B cell (primary cell): ENCODE measurements at regions of chr14 and their contacts with region 1.

Region 1: GRCh38 chr14:63641473-63642228 is at the start of gene WDR89:
- DNase-seq: peak; percentile 99
- ATAC-seq: peak; percentile 83
- H3K4me3 ChIP-seq: peak within 1 kb of the TSS; percentile 81 to 98 (median 86)
- H3K4me3 Mint-ChIP-seq: peak within 1 kb of the TSS; percentile 85
- H3K27ac ChIP-seq: peak within 1 kb of the TSS; percentile 97 to 99
- H3K27ac Mint-ChIP-seq: peak within 1 kb of the TSS; percentile 89
- H3K4me1 ChIP-seq: peaks cover 18% of the 10 kb centered on the region in 2 donors
- H3K4me1 Mint-ChIP-seq: peaks cover 34% of the 10 kb centered on the region
- H3K27me3 ChIP-seq: no peaks in the 10 kb centered on the region
- H3K27me3 Mint-ChIP-seq: no peaks in the 10 kb centered on the region
- CTCF ChIP-seq: peak; percentile 88
- total RNA-seq, gene WDR89: 19.0 and 21.8 TPM in 2 replicates

Region 2: GRCh38 chr14:63717702-63718101 is 76.1 kb after region 1 on chr14:
- CTCF ChIA-PET with region 1: no interaction called
- POLR2A ChIA-PET with region 1: no interaction called
- intact Hi-C with region 1: loop called (anchors 5 kb)
- DNase-seq: peak; percentile 37
- ATAC-seq: no peak
- H3K4me3 ChIP-seq: no peak overlapping the region
- H3K4me3 Mint-ChIP-seq: no peak overlapping the region
- H3K27ac ChIP-seq: no peak overlapping the region
- H3K27ac Mint-ChIP-seq: no peak overlapping the region
- H3K4me1 ChIP-seq: peaks cover 0 to 5% of the 10 kb centered on the region in 2 donors
- H3K4me1 Mint-ChIP-seq: peaks cover 25% of the 10 kb centered on the region
- H3K27me3 ChIP-seq: no peaks in the 10 kb centered on the region
- H3K27me3 Mint-ChIP-seq: no peaks in the 10 kb centered on the region
- CTCF ChIP-seq: no peak

Region 3: DNA sequence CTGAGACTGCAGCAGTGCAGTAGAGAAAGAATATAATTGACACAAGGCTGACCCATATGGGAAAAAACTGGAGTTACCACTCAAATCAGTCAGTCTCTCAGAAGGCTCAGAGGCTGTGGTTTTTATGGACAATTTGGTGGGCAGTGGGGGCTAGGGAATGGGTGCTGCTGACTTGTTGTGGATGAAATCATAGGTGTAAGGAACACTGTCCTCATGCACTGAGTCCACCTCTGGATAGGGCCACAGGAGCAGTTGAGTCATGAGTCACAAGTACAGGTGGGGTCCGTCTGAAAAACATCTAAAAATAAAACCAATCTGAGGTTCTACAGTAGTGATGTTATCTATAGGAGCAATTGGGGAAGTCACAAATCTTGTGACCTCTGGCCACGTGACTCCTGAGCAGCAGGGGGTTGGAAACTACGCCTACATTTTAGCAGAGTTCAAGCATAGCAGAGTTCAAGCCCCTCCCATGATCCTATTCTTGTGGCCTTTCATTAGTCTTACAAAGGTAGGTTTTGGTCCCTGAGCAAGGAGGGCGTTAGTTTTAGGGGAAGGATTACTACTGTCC is 104.3 kb after region 1 on chr14:
- CTCF ChIA-PET with region 1: no interaction called
- POLR2A ChIA-PET with region 1: interaction called, 7 read pairs
- intact Hi-C with region 1: loop called (anchors 1 kb)
- DNase-seq: peak; percentile 87
- ATAC-seq: peak; percentile 75
- H3K4me3 ChIP-seq: peak overlapping the region in 2 of 5 experiments; percentile 1 to 41
- H3K4me3 Mint-ChIP-seq: peak overlapping the region; percentile 76
- H3K27ac ChIP-seq: peak overlapping the region; percentile 94 to 97
- H3K27ac Mint-ChIP-seq: peak overlapping the region; percentile 99
- H3K4me1 ChIP-seq: peaks cover 39 to 54% of the 10 kb centered on the region in 2 donors
- H3K4me1 Mint-ChIP-seq: peaks cover 40% of the 10 kb centered on the region
- H3K27me3 ChIP-seq: no peaks in the 10 kb centered on the region
- H3K27me3 Mint-ChIP-seq: no peaks in the 10 kb centered on the region
- CTCF ChIP-seq: no peak

Region 4: DNA sequence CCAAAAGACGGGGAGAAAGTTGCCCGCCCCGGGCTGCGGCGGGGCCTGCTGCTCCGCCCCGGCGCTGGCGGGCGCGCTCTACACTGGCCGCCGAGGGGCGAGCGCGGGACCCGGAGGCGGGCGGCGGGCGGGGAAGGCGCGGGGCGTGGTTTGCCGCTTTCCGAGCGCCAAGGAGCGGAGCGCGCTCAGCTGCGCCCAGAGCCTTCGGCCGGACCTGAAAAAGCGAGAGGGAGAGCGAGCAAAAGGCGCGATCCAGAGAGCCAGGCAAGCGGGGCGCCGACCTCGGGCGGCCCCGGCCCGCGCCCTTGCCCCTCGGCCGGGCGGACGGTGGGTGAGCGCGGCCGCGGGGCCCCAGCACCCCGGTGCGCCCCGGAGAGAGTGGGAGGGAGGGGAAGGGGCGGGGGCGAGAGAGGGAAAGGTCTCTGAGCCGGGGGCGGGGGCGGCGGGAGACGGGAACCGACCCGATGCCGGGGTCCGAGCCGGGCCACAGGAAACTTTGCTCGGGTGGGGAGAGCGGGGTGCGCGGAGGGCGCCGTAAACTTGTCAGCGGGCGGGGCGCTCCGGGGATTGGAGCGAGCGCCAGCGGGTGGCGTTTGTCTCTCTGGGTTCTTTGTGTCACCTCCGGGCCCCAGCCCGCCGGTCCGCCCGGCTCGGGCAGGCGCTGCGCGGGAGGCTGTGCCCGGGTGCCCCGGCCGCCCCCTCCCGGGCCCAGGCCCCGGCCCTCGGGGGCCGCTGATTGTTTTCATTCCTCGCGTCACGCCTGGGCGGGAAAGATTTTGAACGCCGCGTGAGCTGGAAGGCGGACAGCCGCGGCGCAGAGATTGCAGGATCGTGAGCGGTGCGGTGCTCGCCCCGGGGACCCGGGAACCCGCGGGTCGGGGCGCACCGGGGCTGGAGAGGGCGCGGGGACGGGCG is 211.4 kb after region 1 on chr14 and contains the start of gene SYNE2:
- CTCF ChIA-PET with region 1: no interaction called
- POLR2A ChIA-PET with region 1: no interaction called
- intact Hi-C with region 1: loop called (anchors 2 kb)
- DNase-seq: peak; percentile 89
- ATAC-seq: peak; percentile 84
- H3K4me3 ChIP-seq: peak within 1 kb of the TSS; percentile 46 to 72 (median 64)
- H3K4me3 Mint-ChIP-seq: peak within 1 kb of the TSS; percentile 94
- H3K27ac ChIP-seq: peak within 1 kb of the TSS; percentile 30 to 43
- H3K27ac Mint-ChIP-seq: peak within 1 kb of the TSS; percentile 95
- H3K4me1 ChIP-seq: peaks cover 13 to 14% of the 10 kb centered on the region in 2 donors
- H3K4me1 Mint-ChIP-seq: peaks cover 27% of the 10 kb centered on the region
- H3K27me3 ChIP-seq: peaks cover 0 to 6% (median 0%) of the 10 kb centered on the region in 4 experiments
- H3K27me3 Mint-ChIP-seq: no peaks in the 10 kb centered on the region
- CTCF ChIP-seq: peak; percentile 33
- total RNA-seq, gene SYNE2: 105 TPM in 2 replicates

Region 5: DNA sequence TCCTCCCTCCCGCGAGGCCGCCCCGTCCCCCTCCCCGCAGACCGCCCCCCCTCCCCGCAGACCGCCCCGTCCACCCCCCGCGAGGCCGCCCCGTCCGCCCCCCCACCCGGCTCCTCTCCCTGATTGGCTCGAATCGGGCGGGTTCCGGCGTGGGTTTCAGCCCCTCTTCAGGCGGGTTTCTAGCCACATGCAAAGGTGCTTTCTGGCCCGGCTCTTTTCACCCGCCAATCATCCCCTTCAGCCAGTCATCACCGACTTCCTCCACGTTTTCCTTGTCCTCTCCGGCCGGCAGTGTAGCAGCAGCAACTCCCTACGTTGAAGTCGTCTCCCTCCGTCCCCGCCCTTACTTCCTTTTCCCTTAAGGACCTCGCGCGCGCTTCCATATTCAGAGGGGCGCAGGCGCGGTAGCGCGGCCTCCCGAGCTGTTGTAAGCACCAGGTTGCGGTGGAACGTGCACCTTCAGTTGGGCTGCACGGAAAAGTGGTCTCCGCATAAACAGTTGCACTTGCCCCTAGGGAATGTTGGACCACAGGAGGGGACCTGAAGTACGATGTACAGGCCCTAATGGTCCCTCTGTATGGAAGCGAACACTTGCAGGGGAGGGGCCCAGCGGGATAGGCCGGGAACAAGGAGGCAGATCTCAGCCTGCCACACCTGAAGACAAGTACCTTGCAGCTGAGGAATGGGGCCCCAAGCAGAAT is 697.1 kb after region 1 on chr14:
- CTCF ChIA-PET with region 1: no interaction called
- POLR2A ChIA-PET with region 1: no interaction called
- intact Hi-C with region 1: loop called (anchors 2 kb)
- DNase-seq: peak; percentile 90
- ATAC-seq: peak; percentile 90
- H3K4me3 ChIP-seq: peak overlapping the region; percentile 28 to 90 (median 80)
- H3K4me3 Mint-ChIP-seq: peak overlapping the region; percentile 90
- H3K27ac ChIP-seq: peak overlapping the region; percentile 69 to 82
- H3K27ac Mint-ChIP-seq: peak overlapping the region; percentile 90
- H3K4me1 ChIP-seq: peaks cover 14 to 17% of the 10 kb centered on the region in 2 donors
- H3K4me1 Mint-ChIP-seq: peaks cover 26% of the 10 kb centered on the region
- H3K27me3 ChIP-seq: no peaks in the 10 kb centered on the region
- H3K27me3 Mint-ChIP-seq: no peaks in the 10 kb centered on the region
- CTCF ChIP-seq: no peak

Region 6: DNA sequence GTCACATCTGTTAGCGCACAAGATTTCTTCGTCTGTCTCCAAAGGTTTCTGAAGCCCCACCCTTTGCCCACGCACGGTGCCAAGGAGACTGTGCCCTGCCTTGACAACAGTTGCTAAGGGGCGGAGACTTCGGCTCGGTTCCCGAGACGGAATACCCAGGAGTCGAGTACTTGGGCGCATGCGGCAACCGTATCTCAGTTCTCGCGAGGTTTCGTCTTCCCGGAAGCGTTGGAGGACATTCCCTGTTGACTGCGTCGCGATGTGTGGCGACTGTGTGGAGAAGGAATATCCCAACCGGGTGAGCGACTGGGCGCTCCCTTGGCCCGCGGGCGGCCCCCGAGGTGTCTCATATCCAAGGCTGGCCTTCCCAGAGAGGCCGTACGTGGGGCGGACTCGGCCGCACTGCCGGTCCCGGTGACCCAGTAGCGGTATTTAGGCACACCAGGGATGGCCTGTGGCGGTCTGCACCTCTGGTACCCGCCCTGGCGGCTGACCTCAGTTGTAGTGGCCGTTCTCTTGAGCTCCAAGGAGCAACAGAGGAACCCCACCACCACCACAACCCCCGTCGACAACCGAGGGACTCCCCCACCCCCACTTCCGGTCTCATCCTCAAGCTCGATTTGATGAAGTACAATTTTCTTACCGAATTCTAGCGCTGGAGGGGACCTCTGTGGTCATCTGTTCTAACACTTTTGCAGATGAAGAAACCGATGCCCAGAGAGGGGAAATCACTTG is 1272.8 kb after region 1 on chr14 and contains the start of gene CHURC1:
- CTCF ChIA-PET with region 1: no interaction called
- POLR2A ChIA-PET with region 1: no interaction called
- intact Hi-C with region 1: loop called (anchors 2 kb)
- DNase-seq: peak; percentile 98
- ATAC-seq: peak; percentile 97
- H3K4me3 ChIP-seq: peak within 1 kb of the TSS; percentile 88 to 100 (median 96)
- H3K4me3 Mint-ChIP-seq: peak within 1 kb of the TSS; percentile 85
- H3K27ac ChIP-seq: peak within 1 kb of the TSS; percentile 98 to 99
- H3K27ac Mint-ChIP-seq: peak within 1 kb of the TSS; percentile 96
- H3K4me1 ChIP-seq: peaks cover 17 to 24% of the 10 kb centered on the region in 2 donors
- H3K4me1 Mint-ChIP-seq: peaks cover 40% of the 10 kb centered on the region
- H3K27me3 ChIP-seq: peaks cover 0 to 4% (median 0%) of the 10 kb centered on the region in 4 experiments
- H3K27me3 Mint-ChIP-seq: peaks cover 13% of the 10 kb centered on the region
- CTCF ChIP-seq: no peak
- total RNA-seq, gene CHURC1: 67.7 and 77.1 TPM in 2 replicates